Right cardiac atrium (tissue), 5 donors: ENCODE measurements at regions of chr22 and their contacts with region 1.

Region 1: DNA sequence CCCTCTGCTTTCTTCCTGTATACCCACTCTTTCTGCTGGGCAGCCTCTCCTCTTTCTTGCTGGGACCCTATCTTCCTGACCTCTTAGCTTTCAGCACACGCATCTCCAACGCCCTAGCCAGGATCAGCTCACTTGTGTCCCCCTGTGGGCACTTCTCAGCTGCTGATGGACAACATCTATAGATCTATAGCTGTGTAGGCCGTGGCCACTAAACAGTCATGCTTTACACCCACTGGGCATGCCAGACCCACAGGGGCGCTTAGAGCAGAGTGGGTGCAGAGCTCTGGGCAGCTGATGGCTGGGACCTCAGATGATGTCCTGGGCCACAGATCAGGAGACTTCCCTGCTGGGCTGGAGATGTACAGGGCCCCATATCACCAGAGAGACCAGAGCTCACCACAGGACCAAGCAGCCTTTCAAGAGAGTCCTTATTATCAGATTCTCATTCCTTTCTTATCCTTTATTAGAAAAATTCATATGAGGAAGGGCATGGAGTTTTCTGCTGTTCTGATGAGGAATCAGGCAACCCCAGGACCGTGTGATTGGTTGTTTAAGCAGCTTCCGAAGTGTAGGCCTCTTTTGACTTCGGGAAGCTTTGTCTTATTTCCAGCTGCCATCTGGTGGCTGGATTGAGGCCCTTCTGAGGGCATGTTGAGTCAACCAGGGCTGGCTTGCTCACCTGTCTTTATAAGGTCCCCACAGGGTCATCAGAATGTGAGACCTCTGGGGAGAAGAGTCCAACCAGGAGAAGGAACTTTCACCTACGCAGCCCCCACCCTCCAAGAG is 60.5 kb downstream of the OSBP2 start:
- DNase-seq: peak; percentile 32 to 61 (median 60)
- ATAC-seq: peak; percentile 71 to 82
- H3K4me3 ChIP-seq: no peak overlapping the region
- H3K27ac ChIP-seq: no peak overlapping the region
- H3K4me1 ChIP-seq: no peaks in the 10 kb centered on the region
- H3K27me3 ChIP-seq: no peaks in the 10 kb centered on the region

Region 2: DNA sequence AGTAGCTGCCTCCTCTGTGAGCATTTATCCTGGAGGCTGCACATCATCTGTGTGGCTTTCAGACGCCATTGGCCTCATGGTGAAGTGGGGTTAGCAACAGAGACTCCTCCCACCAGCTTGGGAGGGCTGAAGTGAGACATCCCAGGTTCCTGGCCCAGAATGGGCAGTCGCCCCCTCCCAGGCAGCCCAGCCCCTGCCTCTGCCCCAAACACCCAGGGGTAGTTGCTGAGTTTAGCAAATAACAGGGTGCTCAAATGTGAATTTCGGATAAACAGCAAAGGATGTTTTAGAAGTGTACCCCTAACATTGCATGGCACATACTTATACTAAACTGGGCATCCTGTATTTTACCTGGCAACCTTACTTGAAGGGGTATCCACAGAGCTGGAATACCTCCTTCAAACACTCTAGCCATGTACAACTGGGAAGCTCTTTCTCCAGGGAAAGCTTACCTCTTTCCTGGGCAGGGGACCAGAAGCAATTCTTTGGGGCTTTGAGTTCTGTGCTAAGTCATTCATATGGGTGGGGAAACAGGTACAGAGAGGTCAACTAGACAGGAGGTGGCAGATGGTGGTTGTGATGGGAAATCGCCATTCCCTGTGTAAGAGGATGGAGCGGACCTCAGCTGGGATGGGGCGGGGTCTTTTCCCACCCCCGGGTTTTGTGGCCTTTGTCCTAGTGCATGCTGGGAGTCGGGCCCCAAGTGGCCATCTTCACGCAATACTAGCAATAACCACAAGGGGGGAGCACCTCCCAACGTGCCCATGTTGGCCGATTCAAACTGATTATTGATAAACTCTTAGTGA is 310.3 kb before region 1 on chr22:
- intact Hi-C with region 1: loop called in 1 of 4 experiments (anchors 10 kb)
- DNase-seq: no peak
- ATAC-seq: peak in 1 of 2 donors; percentile 69
- H3K4me3 ChIP-seq: no peak overlapping the region
- H3K27ac ChIP-seq: no peak overlapping the region
- H3K4me1 ChIP-seq: no peaks in the 10 kb centered on the region
- H3K27me3 ChIP-seq: no peaks in the 10 kb centered on the region

Region 3: DNA sequence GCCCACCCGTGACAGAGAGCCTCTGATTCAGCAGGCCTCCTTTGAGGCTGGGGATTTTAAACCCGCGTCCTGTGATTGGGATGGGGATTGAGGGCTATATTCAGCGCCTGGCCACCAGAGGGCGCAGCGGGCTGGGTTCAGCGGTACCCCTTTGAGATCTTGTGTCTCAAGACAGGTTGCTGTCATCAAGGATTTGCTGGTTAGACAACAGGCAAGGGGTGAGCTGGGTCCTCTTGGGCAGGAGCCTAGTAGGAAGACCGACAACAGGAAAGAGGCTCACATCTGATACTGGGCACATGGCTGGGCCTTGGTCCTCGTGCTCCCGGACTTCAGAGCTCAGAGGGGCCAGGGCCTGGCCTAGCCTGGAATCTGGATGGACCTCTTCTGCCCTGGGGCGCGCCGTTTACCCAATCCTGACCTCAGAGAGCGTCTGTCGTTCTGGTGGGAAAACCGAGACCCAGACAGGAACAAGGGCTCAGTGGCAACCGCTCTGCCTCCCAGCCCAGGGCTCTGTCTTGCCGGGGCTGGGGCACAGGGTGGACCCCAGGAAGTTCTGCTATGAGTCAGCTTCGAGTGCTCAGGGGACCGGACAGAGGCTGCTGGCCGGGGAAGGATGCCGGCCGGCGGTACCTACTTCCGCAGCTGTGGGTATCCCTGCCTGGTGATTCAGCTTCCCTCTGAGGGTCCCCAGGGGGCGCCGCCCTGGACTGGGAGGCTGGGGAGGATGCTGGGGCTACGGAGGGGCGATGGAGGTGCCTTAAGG is 120.5 kb before region 1 on chr22:
- intact Hi-C with region 1: loop called (anchors 2 to 10 kb)
- DNase-seq: peak; percentile 87 to 93 (median 92)
- ATAC-seq: peak; percentile 75 to 89
- H3K4me3 ChIP-seq: peak overlapping the region; percentile 29
- H3K27ac ChIP-seq: peak overlapping the region; percentile 88
- H3K4me1 ChIP-seq: peaks cover 12% of the 10 kb centered on the region
- H3K27me3 ChIP-seq: no peaks in the 10 kb centered on the region

Region 4: GRCh38 chr22:30694171-30694639 is 61.0 kb before region 1 on chr22:
- intact Hi-C with region 1: loop called in 1 of 4 experiments (anchors 10 kb)
- DNase-seq: peak; percentile 22 to 74 (median 72)
- ATAC-seq: peak; percentile 53 to 65
- H3K4me3 ChIP-seq: peak overlapping the region; percentile 42
- H3K27ac ChIP-seq: peak overlapping the region; percentile 63
- H3K4me1 ChIP-seq: no peaks in the 10 kb centered on the region
- H3K27me3 ChIP-seq: no peaks in the 10 kb centered on the region